ENCODE measurements at regions of chr17 and their contacts with region 1.

Region 1: GRCh38 chr17:8900626-8901585 is 33.4 kb upstream of the PIK3R6 start:
- DNase-seq: no peak
- H3K4me3 Mint-ChIP-seq: no peak overlapping the region
- H3K27ac Mint-ChIP-seq: no peak overlapping the region
- H3K4me1 Mint-ChIP-seq: peaks cover 60% of the 10 kb centered on the region
- H3K27me3 Mint-ChIP-seq: no peaks in the 10 kb centered on the region

Region 2: GRCh38 chr17:8941520-8941919 is 40.6 kb after region 1 on chr17:
- CTCF ChIA-PET with region 1: interaction called, 3 read pairs
- POLR2A ChIA-PET with region 1: interaction called, 3 read pairs
- intact Hi-C with region 1: loop called (anchors 1 kb)
- DNase-seq: peak; percentile 85
- H3K4me3 Mint-ChIP-seq: peak overlapping the region; percentile 47
- H3K27ac Mint-ChIP-seq: peak overlapping the region; percentile 89
- H3K4me1 Mint-ChIP-seq: peaks cover 69% of the 10 kb centered on the region
- H3K27me3 Mint-ChIP-seq: no peaks in the 10 kb centered on the region

Region 3: GRCh38 chr17:8949061-8949661 is 48.3 kb after region 1 on chr17:
- CTCF ChIA-PET with region 1: interaction called, 5 read pairs
- POLR2A ChIA-PET with region 1: interaction called, 3 read pairs
- intact Hi-C with region 1: loop called (anchors 2 kb)
- DNase-seq: peak; percentile 64
- H3K4me3 Mint-ChIP-seq: peak overlapping the region; percentile 54
- H3K27ac Mint-ChIP-seq: peak overlapping the region; percentile 81
- H3K4me1 Mint-ChIP-seq: peaks cover 89% of the 10 kb centered on the region
- H3K27me3 Mint-ChIP-seq: no peaks in the 10 kb centered on the region

Region 4: DNA sequence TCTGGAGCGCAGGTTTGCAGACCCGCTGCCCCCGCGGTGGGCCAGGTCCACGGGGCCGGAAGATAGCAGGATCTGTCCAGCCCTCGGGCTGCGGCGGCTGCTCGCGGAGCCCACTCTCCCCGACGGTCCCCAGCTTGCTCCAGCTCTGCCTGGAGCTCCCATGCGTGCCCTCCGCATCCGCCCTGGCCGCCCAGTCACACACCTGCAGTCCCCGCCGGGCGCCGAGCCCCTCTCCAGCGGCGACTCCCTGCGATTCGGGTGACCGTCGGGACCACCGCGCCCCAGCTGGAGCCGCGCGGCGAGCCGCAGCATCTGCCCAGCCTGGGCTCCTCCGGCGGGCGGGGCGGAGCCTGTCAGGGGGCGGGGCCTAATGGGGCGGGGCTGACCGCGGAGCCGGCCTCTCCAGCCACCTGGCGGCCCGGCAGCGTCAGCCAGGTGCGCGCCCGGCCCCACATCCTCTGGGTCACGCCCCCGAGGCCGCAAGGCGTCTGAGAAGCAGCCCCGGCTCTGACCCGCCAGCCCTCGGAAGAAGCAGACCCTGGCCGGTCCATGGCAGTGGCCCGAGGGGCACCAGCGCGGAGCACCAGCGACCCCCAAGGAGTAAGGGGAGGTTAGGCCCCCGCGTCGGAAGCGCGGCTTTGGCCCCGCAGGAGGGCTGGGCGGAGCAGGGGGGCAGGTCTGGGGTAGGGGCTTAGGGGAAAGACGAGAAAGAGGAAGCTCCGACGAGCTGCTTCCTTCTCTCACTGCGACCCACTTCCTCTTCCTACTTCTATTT is 64.7 kb after region 1 on chr17 and contains the start of gene PIK3R5:
- CTCF ChIA-PET with region 1: interaction called, 6 read pairs
- POLR2A ChIA-PET with region 1: no interaction called
- intact Hi-C with region 1: loop called (anchors 2 kb)
- DNase-seq: peak; percentile 90
- H3K4me3 Mint-ChIP-seq: peak within 1 kb of the TSS; percentile 88
- H3K27ac Mint-ChIP-seq: peak within 1 kb of the TSS; percentile 80
- H3K4me1 Mint-ChIP-seq: peaks cover 48% of the 10 kb centered on the region
- H3K27me3 Mint-ChIP-seq: no peaks in the 10 kb centered on the region
- total RNA-seq, gene PIK3R5: 20.7 to 22.4 TPM